ENCODE measurements at regions of chrX and their contacts with region 1.

Region 1: GRCh38 chrX:79336869-79337815 is 30.0 kb downstream of the ITM2A start:
- DNase-seq: peak in 7 of 9 donors; percentile 14 to 58 (median 34)
- ATAC-seq: peak; percentile 71
- H3K4me3 ChIP-seq: peak overlapping the region; percentile 51
- H3K4me3 Mint-ChIP-seq: peak overlapping the region; percentile 56 to 89 (median 84)
- H3K27ac ChIP-seq: peak overlapping the region; percentile 72
- H3K27ac Mint-ChIP-seq: peak overlapping the region; percentile 85 to 97 (median 91)
- H3K4me1 ChIP-seq: peaks cover 0 to 4% of the 10 kb centered on the region in 2 donors
- H3K4me1 Mint-ChIP-seq: peaks cover 2 to 36% (median 23%) of the 10 kb centered on the region in 7 donors
- H3K27me3 ChIP-seq: no peaks in the 10 kb centered on the region
- H3K27me3 Mint-ChIP-seq: no peaks in the 10 kb centered on the region

Region 2: GRCh38 chrX:79161655-79162054 is 175.5 kb before region 1 on chrX:
- CTCF ChIA-PET with region 1: no interaction called
- POLR2A ChIA-PET with region 1: interaction called, 3 read pairs
- intact Hi-C with region 1: loop called in 1 of 2 experiments (anchors 5 kb)
- DNase-seq: peak in 8 of 9 donors; percentile 22 to 85 (median 77)
- ATAC-seq: peak; percentile 95
- H3K4me3 ChIP-seq: peak overlapping the region; percentile 52
- H3K4me3 Mint-ChIP-seq: peak overlapping the region; percentile 80 to 96 (median 90)
- H3K27ac ChIP-seq: peak overlapping the region; percentile 76
- H3K27ac Mint-ChIP-seq: peak overlapping the region; percentile 95 to 99 (median 97)
- H3K4me1 ChIP-seq: peaks cover 48 to 50% of the 10 kb centered on the region in 2 donors
- H3K4me1 Mint-ChIP-seq: peaks cover 16 to 79% (median 68%) of the 10 kb centered on the region in 7 donors
- H3K27me3 ChIP-seq: no peaks in the 10 kb centered on the region
- H3K27me3 Mint-ChIP-seq: no peaks in the 10 kb centered on the region

Region 3: GRCh38 chrX:79270401-79270800 is 66.7 kb before region 1 on chrX:
- CTCF ChIA-PET with region 1: no interaction called
- POLR2A ChIA-PET with region 1: no interaction called
- intact Hi-C with region 1: loop called in 1 of 2 experiments (anchors 5 kb)
- DNase-seq: peak; percentile 29 to 76 (median 68)
- ATAC-seq: peak; percentile 98
- H3K4me3 ChIP-seq: no peak overlapping the region
- H3K4me3 Mint-ChIP-seq: peak overlapping the region; percentile 17 to 77 (median 56)
- H3K27ac ChIP-seq: peak overlapping the region; percentile 61
- H3K27ac Mint-ChIP-seq: peak overlapping the region in 8 of 9 donors; percentile 84 to 94 (median 90)
- H3K4me1 ChIP-seq: peaks cover 24 to 34% of the 10 kb centered on the region in 2 donors
- H3K4me1 Mint-ChIP-seq: peaks cover 13 to 68% (median 45%) of the 10 kb centered on the region in 7 donors
- H3K27me3 ChIP-seq: no peaks in the 10 kb centered on the region
- H3K27me3 Mint-ChIP-seq: no peaks in the 10 kb centered on the region

Region 4: GRCh38 chrX:79325263-79325958 is 11.7 kb before region 1 on chrX:
- CTCF ChIA-PET with region 1: no interaction called
- POLR2A ChIA-PET with region 1: interaction called, 3 read pairs
- intact Hi-C with region 1: loop called (anchors 1 kb)
- DNase-seq: peak in 8 of 9 donors; percentile 25 to 69 (median 50)
- ATAC-seq: peak; percentile 86
- H3K4me3 ChIP-seq: no peak overlapping the region
- H3K4me3 Mint-ChIP-seq: peak overlapping the region; percentile 52 to 86 (median 82)
- H3K27ac ChIP-seq: peak overlapping the region; percentile 57
- H3K27ac Mint-ChIP-seq: peak overlapping the region; percentile 78 to 97 (median 89)
- H3K4me1 ChIP-seq: no peaks in the 10 kb centered on the region
- H3K4me1 Mint-ChIP-seq: peaks cover 0 to 29% (median 14%) of the 10 kb centered on the region in 7 donors
- H3K27me3 ChIP-seq: no peaks in the 10 kb centered on the region
- H3K27me3 Mint-ChIP-seq: no peaks in the 10 kb centered on the region

Region 5: GRCh38 chrX:79361192-79361870 is 24.2 kb after region 1 on chrX:
- CTCF ChIA-PET with region 1: interaction called, 3 read pairs
- POLR2A ChIA-PET with region 1: interaction called, 5 read pairs
- intact Hi-C with region 1: loop called (anchors 1 kb)
- DNase-seq: peak in 7 of 9 donors; percentile 29 to 72 (median 56)
- ATAC-seq: peak; percentile 84
- H3K4me3 ChIP-seq: no peak overlapping the region
- H3K4me3 Mint-ChIP-seq: peak overlapping the region in 9 of 10 donors; percentile 29 to 92 (median 60)
- H3K27ac ChIP-seq: peak overlapping the region; percentile 63
- H3K27ac Mint-ChIP-seq: peak overlapping the region; percentile 66 to 94 (median 90)
- H3K4me1 ChIP-seq: peaks cover 3 to 11% of the 10 kb centered on the region in 2 donors
- H3K4me1 Mint-ChIP-seq: peaks cover 3 to 38% (median 31%) of the 10 kb centered on the region in 7 donors
- H3K27me3 ChIP-seq: no peaks in the 10 kb centered on the region
- H3K27me3 Mint-ChIP-seq: no peaks in the 10 kb centered on the region

Measured in naive thymus-derived CD4-positive, alpha-beta T cell (primary cell).